ENCODE measurements at regions of chr11 and their contacts with region 1.

Region 1: DNA sequence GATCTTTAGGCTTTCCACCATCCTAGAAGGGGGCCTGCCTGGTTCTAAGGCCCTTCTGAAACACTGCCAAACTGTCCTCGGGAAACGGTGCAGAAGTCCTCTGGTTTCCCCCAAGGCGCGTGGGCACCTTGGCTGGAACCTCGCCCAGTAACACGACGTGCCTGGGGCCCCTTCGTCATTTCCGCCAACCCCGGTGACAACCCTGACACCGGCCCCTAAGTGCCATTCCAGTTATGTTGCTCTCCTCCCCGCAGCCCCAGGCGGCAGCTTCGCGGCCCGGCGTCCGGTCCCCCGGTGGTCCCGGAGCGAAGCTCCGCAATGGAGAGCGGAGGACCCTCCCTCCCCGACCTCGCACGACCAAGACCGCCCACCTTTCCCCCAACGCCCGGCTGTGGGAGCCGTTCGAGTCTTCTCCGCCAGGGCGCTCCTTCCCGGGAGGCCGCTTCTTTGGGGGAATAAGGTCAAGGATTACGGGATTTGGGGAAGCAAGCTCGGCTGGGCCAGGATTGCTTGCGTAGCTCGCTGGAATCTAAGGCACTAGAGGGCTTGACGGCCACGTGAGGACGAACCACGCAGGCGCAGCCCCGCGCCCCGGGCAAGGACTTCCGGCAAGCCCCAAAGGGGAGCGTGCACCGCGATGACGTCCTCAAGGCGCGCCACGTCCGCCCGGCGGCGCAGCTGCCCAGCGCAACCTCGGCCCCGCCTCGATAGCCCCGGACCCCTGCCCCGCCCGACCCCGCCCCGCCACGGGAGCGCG is 626 bp downstream of the RNH1 start:
- DNase-seq: peak; percentile 95 to 98 (median 97)
- ATAC-seq: peak; percentile 79
- H3K4me3 ChIP-seq: peak overlapping the region; percentile 99
- H3K4me3 Mint-ChIP-seq: peak overlapping the region; percentile 93 to 99 (median 96)
- H3K27ac ChIP-seq: peak overlapping the region; percentile 99
- H3K27ac Mint-ChIP-seq: peak overlapping the region; percentile 98 to 100 (median 99)
- H3K4me1 ChIP-seq: peaks cover 12 to 26% of the 10 kb centered on the region in 2 donors
- H3K4me1 Mint-ChIP-seq: peaks cover 5 to 34% (median 21%) of the 10 kb centered on the region in 7 donors
- H3K27me3 ChIP-seq: no peaks in the 10 kb centered on the region
- H3K27me3 Mint-ChIP-seq: no peaks in the 10 kb centered on the region

Region 2: DNA sequence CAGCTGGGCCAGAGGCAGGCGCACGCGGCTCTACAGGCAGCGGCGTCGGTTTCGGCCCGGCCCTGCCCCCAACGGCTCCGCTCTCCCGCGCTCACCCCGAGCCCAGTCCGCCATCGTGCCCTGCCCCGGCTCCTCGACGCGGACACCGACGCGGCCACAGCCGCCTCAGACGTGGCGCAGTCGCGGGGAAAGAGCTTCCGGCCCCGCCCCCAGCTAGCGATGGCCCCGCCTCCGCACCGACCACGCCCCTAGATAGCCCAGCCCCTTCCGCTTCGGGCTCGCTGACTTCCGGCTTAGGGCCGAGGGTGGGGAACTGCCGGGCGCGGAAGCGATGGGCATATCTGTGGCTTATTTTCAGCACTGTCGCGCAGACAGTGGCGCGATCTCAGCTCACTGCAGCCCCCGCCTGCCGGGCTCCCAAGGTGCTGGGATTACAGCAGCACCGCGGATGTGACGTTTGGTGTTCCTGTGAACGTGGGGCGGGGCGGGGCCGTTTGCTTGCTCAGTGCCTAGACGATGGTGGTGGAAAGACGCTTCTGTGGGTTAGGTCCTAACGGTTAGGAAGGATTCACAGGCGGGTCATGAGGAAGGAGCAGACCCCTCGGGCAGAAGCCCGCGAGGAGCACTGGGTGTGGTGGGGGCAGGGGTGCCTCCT is 299.1 kb before region 1 on chr11 and contains the starts of genes BET1L and RIC8A:
- CTCF ChIA-PET with region 1: no interaction called
- POLR2A ChIA-PET with region 1: interaction called, 30 read pairs
- intact Hi-C with region 1: loop called (anchors 1 kb)
- DNase-seq: peak; percentile 92 to 99 (median 98)
- ATAC-seq: peak; percentile 93
- H3K4me3 ChIP-seq: peak within 1 kb of the TSS; percentile 98
- H3K4me3 Mint-ChIP-seq: peak within 1 kb of the TSS; percentile 89 to 100 (median 96)
- H3K27ac ChIP-seq: peak within 1 kb of the TSS; percentile 93
- H3K27ac Mint-ChIP-seq: peak within 1 kb of the TSS; percentile 97 to 100 (median 99)
- H3K4me1 ChIP-seq: peaks cover 28 to 57% of the 10 kb centered on the region in 2 donors
- H3K4me1 Mint-ChIP-seq: peaks cover 17 to 72% (median 50%) of the 10 kb centered on the region in 7 donors
- H3K27me3 ChIP-seq: no peaks in the 10 kb centered on the region
- H3K27me3 Mint-ChIP-seq: no peaks in the 10 kb centered on the region
- total RNA-seq, gene BET1L: 47.1 to 125 (median 63.2) TPM
- total RNA-seq, gene RIC8A: 74.4 to 119 (median 92.0) TPM

Region 3: DNA sequence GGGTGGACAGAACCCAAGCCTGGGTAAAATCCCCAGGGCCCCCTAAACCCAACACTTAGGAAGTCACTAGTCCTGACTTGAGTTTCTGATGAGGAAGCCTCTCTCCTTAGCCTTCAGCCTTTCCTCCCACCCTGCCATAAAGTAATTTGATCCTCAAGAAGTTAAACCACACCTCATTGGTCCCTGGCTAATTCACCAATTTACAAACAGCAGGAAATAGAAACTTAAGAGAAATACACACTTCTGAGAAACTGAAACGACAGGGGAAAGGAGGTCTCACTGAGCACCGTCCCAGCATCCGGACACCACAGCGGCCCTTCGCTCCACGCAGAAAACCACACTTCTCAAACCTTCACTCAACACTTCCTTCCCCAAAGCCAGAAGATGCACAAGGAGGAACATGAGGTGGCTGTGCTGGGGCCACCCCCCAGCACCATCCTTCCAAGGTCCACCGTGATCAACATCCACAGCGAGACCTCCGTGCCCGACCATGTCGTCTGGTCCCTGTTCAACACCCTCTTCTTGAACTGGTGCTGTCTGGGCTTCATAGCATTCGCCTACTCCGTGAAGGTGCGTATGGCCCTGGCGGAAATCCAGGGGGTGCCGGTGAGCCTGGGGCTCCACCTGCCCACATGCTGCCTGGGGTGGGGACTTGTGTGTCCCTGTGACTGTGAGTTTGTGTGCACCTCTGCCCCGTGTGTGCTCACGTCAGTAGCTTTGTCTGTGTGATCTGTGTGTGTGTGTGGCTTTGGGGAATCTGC is 192.4 kb before region 1 on chr11 and contains the start of gene IFITM1:
- CTCF ChIA-PET with region 1: no interaction called
- POLR2A ChIA-PET with region 1: interaction called, 3 read pairs
- intact Hi-C with region 1: loop called (anchors 5 kb)
- DNase-seq: peak in 8 of 9 donors; percentile 55 to 80 (median 76)
- ATAC-seq: peak; percentile 72
- H3K4me3 ChIP-seq: peak within 1 kb of the TSS; percentile 71
- H3K4me3 Mint-ChIP-seq: peak within 1 kb of the TSS; percentile 88 to 100 (median 96)
- H3K27ac ChIP-seq: peak within 1 kb of the TSS; percentile 95
- H3K27ac Mint-ChIP-seq: peak within 1 kb of the TSS; percentile 94 to 99 (median 99)
- H3K4me1 ChIP-seq: peaks cover 13 to 37% of the 10 kb centered on the region in 2 donors
- H3K4me1 Mint-ChIP-seq: peaks cover 26 to 43% (median 34%) of the 10 kb centered on the region in 7 donors
- H3K27me3 ChIP-seq: no peaks in the 10 kb centered on the region
- H3K27me3 Mint-ChIP-seq: peaks cover 0 to 3% (median 0%) of the 10 kb centered on the region in 5 donors
- total RNA-seq, gene IFITM1: 97.4 to 985 (median 241) TPM

Region 4: GRCh38 chr11:447923-448731 is 58.3 kb before region 1 on chr11:
- CTCF ChIA-PET with region 1: interaction called, 3 read pairs
- POLR2A ChIA-PET with region 1: interaction called, 17 read pairs
- intact Hi-C with region 1: loop called (anchors 1 kb)
- DNase-seq: peak; percentile 86 to 98 (median 93)
- ATAC-seq: peak; percentile 86
- H3K4me3 ChIP-seq: peak overlapping the region; percentile 74
- H3K4me3 Mint-ChIP-seq: peak overlapping the region; percentile 84 to 95 (median 89)
- H3K27ac ChIP-seq: peak overlapping the region; percentile 98
- H3K27ac Mint-ChIP-seq: peak overlapping the region; percentile 79 to 98 (median 95)
- H3K4me1 ChIP-seq: peaks cover 16 to 24% of the 10 kb centered on the region in 2 donors
- H3K4me1 Mint-ChIP-seq: peaks cover 9 to 25% (median 22%) of the 10 kb centered on the region in 7 donors
- H3K27me3 ChIP-seq: no peaks in the 10 kb centered on the region
- H3K27me3 Mint-ChIP-seq: peaks cover 0 to 7% (median 0%) of the 10 kb centered on the region in 5 donors

Region 5: DNA sequence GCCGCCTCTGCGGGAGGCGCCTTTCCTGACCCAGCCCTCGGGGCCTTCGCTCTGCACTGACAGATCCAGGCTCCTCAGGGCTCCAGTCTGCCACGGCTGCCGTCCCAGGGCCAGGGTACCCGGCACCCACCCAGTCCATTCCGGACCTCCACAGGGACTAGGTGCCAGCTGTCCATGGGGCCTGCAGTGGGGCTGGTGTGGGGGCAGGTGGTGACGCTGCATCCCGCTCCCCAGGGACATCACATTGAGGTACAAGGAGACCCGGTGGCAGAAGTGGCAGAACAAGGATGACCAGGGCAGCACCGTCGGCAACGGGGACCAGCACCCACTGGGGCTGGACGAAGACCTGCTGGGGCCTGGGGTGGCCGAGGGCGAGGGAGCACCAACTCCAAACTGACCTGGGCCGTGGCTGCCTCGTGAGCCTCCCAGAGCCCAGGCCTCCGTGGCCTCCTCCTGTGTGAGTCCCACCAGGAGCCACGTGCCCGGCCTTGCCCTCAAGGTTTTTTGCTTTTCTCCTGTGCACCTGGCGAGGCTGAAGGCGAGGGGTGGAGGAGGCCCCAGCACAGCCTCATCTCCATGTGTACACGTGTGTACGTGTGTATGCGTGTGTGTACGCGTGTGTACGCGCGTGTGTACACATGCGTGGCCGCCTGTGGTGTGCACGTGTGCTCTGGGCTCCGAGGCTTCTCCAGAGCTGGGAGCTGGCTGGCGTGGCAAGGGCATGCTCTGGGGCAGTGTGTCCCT is 16.1 kb before region 1 on chr11:
- CTCF ChIA-PET with region 1: no interaction called
- POLR2A ChIA-PET with region 1: no interaction called
- intact Hi-C with region 1: no loop called
- DNase-seq: no peak
- ATAC-seq: peak; percentile 12
- H3K4me3 ChIP-seq: no peak overlapping the region
- H3K4me3 Mint-ChIP-seq: no peak overlapping the region
- H3K27ac ChIP-seq: no peak overlapping the region
- H3K27ac Mint-ChIP-seq: no peak overlapping the region
- H3K4me1 ChIP-seq: no peaks in the 10 kb centered on the region
- H3K4me1 Mint-ChIP-seq: no peaks in the 10 kb centered on the region
- H3K27me3 ChIP-seq: no peaks in the 10 kb centered on the region
- H3K27me3 Mint-ChIP-seq: no peaks in the 10 kb centered on the region

Region 6: GRCh38 chr11:568306-569157 is 62.1 kb after region 1 on chr11:
- CTCF ChIA-PET with region 1: no interaction called
- POLR2A ChIA-PET with region 1: no interaction called
- intact Hi-C with region 1: loop called in 1 of 2 experiments (anchors 2 kb)
- DNase-seq: peak; percentile 87 to 99 (median 95)
- ATAC-seq: peak; percentile 95
- H3K4me3 ChIP-seq: peak overlapping the region; percentile 73
- H3K4me3 Mint-ChIP-seq: peak overlapping the region; percentile 69 to 84 (median 77)
- H3K27ac ChIP-seq: peak overlapping the region; percentile 65
- H3K27ac Mint-ChIP-seq: peak overlapping the region in 3 of 9 donors; percentile 40 to 82 (median 68)
- H3K4me1 ChIP-seq: peaks cover 6 to 8% of the 10 kb centered on the region in 2 donors
- H3K4me1 Mint-ChIP-seq: peaks cover 0 to 16% (median 3%) of the 10 kb centered on the region in 7 donors
- H3K27me3 ChIP-seq: no peaks in the 10 kb centered on the region
- H3K27me3 Mint-ChIP-seq: no peaks in the 10 kb centered on the region

Region 7: GRCh38 chr11:720642-721246 is 214.3 kb after region 1 on chr11:
- CTCF ChIA-PET with region 1: no interaction called
- POLR2A ChIA-PET with region 1: interaction called, 3 read pairs
- intact Hi-C with region 1: loop called in 1 of 2 experiments (anchors 1 kb)
- DNase-seq: peak in 3 of 9 donors; percentile 33 to 64 (median 42)
- ATAC-seq: peak; percentile 78
- H3K4me3 ChIP-seq: no peak overlapping the region
- H3K4me3 Mint-ChIP-seq: peak overlapping the region in 5 of 10 donors; percentile 29 to 79 (median 52)
- H3K27ac ChIP-seq: no peak overlapping the region
- H3K27ac Mint-ChIP-seq: no peak overlapping the region
- H3K4me1 ChIP-seq: peaks cover 8 to 21% of the 10 kb centered on the region in 2 donors
- H3K4me1 Mint-ChIP-seq: peaks cover 6 to 15% (median 10%) of the 10 kb centered on the region in 7 donors
- H3K27me3 ChIP-seq: no peaks in the 10 kb centered on the region
- H3K27me3 Mint-ChIP-seq: peaks cover 0 to 43% (median 23%) of the 10 kb centered on the region in 5 donors

Region 8: GRCh38 chr11:2400069-2400760 is 1893.8 kb after region 1 on chr11 and contains the start of gene TSSC4:
- CTCF ChIA-PET with region 1: no interaction called
- POLR2A ChIA-PET with region 1: no interaction called
- intact Hi-C with region 1: loop called in 1 of 2 experiments (anchors 2 kb)
- DNase-seq: peak; percentile 99 to 100 (median 100)
- ATAC-seq: peak; percentile 90
- H3K4me3 ChIP-seq: peak within 1 kb of the TSS; percentile 96
- H3K4me3 Mint-ChIP-seq: peak within 1 kb of the TSS; percentile 87 to 97 (median 92)
- H3K27ac ChIP-seq: peak within 1 kb of the TSS; percentile 93
- H3K27ac Mint-ChIP-seq: peak within 1 kb of the TSS; percentile 90 to 97 (median 95)
- H3K4me1 ChIP-seq: peaks cover 19 to 22% of the 10 kb centered on the region in 2 donors
- H3K4me1 Mint-ChIP-seq: peaks cover 0 to 28% (median 16%) of the 10 kb centered on the region in 7 donors
- H3K27me3 ChIP-seq: no peaks in the 10 kb centered on the region
- H3K27me3 Mint-ChIP-seq: peaks cover 0 to 2% (median 0%) of the 10 kb centered on the region in 5 donors
- total RNA-seq, gene TSSC4: 43.6 to 55.0 (median 50.9) TPM